B cell (primary cell): ENCODE measurements at regions of chr6 and their contacts with region 1.

Region 1: DNA sequence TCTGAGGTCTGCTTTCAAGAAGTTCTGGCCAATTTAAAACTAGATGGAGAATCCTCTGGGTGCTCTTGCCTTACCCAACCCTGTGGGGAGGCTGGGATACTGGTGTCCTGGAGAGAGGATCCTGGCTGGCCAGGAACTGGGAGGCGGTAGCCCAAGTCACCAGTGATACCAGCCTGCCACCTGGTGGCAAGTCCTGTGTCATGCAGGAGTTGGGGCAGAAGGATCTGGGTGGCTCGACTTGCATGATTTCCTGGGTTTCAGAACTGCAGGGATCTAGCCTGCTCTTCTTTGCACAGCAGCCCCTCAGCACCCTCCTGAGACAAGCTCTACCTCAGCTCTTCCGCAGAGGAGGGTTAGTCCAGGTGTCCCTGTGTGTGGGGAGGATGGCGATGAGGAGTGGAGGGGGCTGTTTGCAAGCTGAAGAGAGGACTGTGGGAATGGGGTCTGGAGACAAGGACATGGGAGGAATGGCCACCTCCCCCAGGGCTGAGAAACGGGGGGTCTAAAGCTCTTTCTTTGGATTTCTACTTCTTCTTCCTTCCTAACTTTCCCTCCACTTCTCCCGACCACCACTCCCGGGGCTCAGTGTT is 4.2 kb downstream of the KCNK17 start:
- DNase-seq: peak; percentile 65
- ATAC-seq: peak; percentile 56
- H3K4me3 ChIP-seq: no peak overlapping the region
- H3K4me3 Mint-ChIP-seq: no peak overlapping the region
- H3K27ac ChIP-seq: no peak overlapping the region
- H3K27ac Mint-ChIP-seq: no peak overlapping the region
- H3K4me1 ChIP-seq: peaks cover 21 to 23% of the 10 kb centered on the region in 2 donors
- H3K4me1 Mint-ChIP-seq: peaks cover 24% of the 10 kb centered on the region
- H3K27me3 ChIP-seq: peaks cover 0 to 41% (median 23%) of the 10 kb centered on the region in 4 experiments
- H3K27me3 Mint-ChIP-seq: peaks cover 32% of the 10 kb centered on the region
- CTCF ChIP-seq: peak; percentile 85

Region 2: GRCh38 chr6:39166189-39166911 is 143.7 kb before region 1 on chr6:
- CTCF ChIA-PET with region 1: interaction called, 241 read pairs
- POLR2A ChIA-PET with region 1: no interaction called
- intact Hi-C with region 1: loop called (anchors 1 kb)
- DNase-seq: peak; percentile 83
- ATAC-seq: peak; percentile 78
- H3K4me3 ChIP-seq: no peak overlapping the region
- H3K4me3 Mint-ChIP-seq: no peak overlapping the region
- H3K27ac ChIP-seq: no peak overlapping the region
- H3K27ac Mint-ChIP-seq: no peak overlapping the region
- H3K4me1 ChIP-seq: peaks cover 0 to 7% of the 10 kb centered on the region in 2 donors
- H3K4me1 Mint-ChIP-seq: peaks cover 5% of the 10 kb centered on the region
- H3K27me3 ChIP-seq: peaks cover 0 to 8% (median 3%) of the 10 kb centered on the region in 4 experiments
- H3K27me3 Mint-ChIP-seq: peaks cover 33% of the 10 kb centered on the region
- CTCF ChIP-seq: peak; percentile 93